ENCODE measurements at regions of chr5 and their contacts with region 1.

Region 1: GRCh38 chr5:77775790-77776553 is at the start of gene TBCA:
- DNase-seq: peak; percentile 96
- ATAC-seq: peak; percentile 89
- H3K4me3 Mint-ChIP-seq: peak within 1 kb of the TSS; percentile 95
- H3K27ac Mint-ChIP-seq: peak within 1 kb of the TSS; percentile 93
- H3K4me1 Mint-ChIP-seq: peaks cover 44% of the 10 kb centered on the region
- H3K27me3 Mint-ChIP-seq: no peaks in the 10 kb centered on the region
- CTCF ChIP-seq: no peak
- total RNA-seq, gene TBCA: 113 and 128 TPM in 2 replicates

Region 2: DNA sequence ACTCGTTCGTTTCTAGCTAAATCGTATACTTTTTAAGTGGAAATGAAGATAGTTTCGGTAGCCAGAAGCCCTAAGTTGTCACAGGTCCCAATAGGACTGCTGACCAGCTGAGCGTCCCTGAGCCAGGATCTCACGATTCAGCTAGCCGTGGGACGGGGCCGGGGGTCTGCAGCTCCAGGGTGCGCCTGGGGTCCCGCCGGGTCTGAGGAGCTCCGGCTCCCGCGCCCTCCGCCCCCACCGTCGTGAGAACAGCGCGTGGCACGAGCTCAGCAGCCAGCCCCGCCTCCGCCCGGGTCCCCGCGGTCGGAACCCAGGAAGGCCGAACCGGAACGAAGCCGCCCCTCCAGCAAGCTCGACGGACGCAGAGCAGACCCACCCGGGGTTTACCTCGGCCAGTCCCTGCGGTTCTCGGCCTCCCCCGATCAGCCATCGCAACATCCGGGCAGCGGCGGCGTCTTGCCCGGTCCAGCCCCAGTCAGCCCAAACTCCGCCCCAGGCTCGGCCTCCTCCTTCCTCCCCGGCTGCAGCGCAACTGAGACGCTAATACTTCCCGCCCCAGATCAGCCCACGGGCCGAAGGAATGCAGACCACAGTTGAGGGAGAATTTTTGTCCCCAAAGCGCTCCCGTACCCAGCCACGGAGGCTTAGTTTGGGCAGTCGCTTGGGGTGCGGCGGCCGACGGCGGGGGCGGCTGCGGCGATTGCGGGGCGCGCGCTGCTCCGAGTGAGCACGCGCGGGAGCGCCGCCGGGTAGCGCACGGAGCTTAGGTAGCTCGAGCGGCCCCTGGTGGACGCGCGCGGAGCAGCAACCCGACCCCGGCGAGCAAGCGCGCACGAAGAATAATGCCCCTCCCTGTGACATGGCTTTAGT is 284.0 kb before region 1 on chr5 and contains the start of gene WDR41:
- CTCF ChIA-PET with region 1: no interaction called
- POLR2A ChIA-PET with region 1: no interaction called
- intact Hi-C with region 1: loop called (anchors 1 kb)
- DNase-seq: peak; percentile 87
- ATAC-seq: peak; percentile 82
- H3K4me3 Mint-ChIP-seq: peak within 1 kb of the TSS; percentile 91
- H3K27ac Mint-ChIP-seq: peak within 1 kb of the TSS; percentile 93
- H3K4me1 Mint-ChIP-seq: peaks cover 22% of the 10 kb centered on the region
- H3K27me3 Mint-ChIP-seq: peaks cover 7% of the 10 kb centered on the region
- CTCF ChIP-seq: no peak
- total RNA-seq, gene WDR41: 29.2 and 33.0 TPM in 2 replicates

Region 3: GRCh38 chr5:77844623-77845323 is 68.8 kb after region 1 on chr5:
- CTCF ChIA-PET with region 1: no interaction called
- POLR2A ChIA-PET with region 1: no interaction called
- intact Hi-C with region 1: loop called (anchors 2 kb)
- DNase-seq: no peak
- ATAC-seq: peak; percentile 45
- H3K4me3 Mint-ChIP-seq: peak overlapping the region; percentile 83
- H3K27ac Mint-ChIP-seq: no peak overlapping the region
- H3K4me1 Mint-ChIP-seq: peaks cover 10% of the 10 kb centered on the region
- H3K27me3 Mint-ChIP-seq: peaks cover 25% of the 10 kb centered on the region
- CTCF ChIP-seq: no peak

Region 4: GRCh38 chr5:77972469-77973252 is 196.7 kb after region 1 on chr5:
- CTCF ChIA-PET with region 1: no interaction called
- POLR2A ChIA-PET with region 1: no interaction called
- intact Hi-C with region 1: loop called (anchors 1 kb)
- DNase-seq: peak; percentile 41
- ATAC-seq: peak; percentile 71
- H3K4me3 Mint-ChIP-seq: peak overlapping the region; percentile 69
- H3K27ac Mint-ChIP-seq: no peak overlapping the region
- H3K4me1 Mint-ChIP-seq: peaks cover 17% of the 10 kb centered on the region
- H3K27me3 Mint-ChIP-seq: peaks cover 46% of the 10 kb centered on the region
- CTCF ChIP-seq: no peak

Region 5: DNA sequence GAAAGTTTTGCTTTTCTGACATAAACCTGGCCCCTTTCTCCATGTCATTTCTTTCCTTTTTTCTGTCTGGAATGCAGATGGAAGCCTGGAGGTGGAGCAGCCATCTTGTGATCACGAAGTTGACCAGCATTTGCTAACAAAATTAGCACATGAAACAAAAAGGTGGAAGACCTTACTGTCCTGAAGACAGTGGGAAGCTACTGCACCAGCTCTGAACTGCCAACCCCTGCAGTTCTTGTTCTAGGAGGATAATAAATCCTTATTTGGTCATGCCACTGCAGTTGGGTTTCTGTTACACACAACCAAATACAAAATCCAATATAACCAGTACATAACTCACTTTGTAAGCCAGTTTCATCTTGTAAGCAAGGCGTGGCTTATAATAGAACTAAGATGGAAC is 249.6 kb after region 1 on chr5:
- CTCF ChIA-PET with region 1: no interaction called
- POLR2A ChIA-PET with region 1: no interaction called
- intact Hi-C with region 1: no loop called
- DNase-seq: no peak
- ATAC-seq: no peak
- H3K4me3 Mint-ChIP-seq: no peak overlapping the region
- H3K27ac Mint-ChIP-seq: no peak overlapping the region
- H3K4me1 Mint-ChIP-seq: no peaks in the 10 kb centered on the region
- H3K27me3 Mint-ChIP-seq: no peaks in the 10 kb centered on the region
- CTCF ChIP-seq: no peak

Region 6: GRCh38 chr5:78221964-78222451 is 446.0 kb after region 1 on chr5:
- CTCF ChIA-PET with region 1: no interaction called
- POLR2A ChIA-PET with region 1: no interaction called
- intact Hi-C with region 1: loop called (anchors 1 kb)
- DNase-seq: peak; percentile 47
- ATAC-seq: peak; percentile 100
- H3K4me3 Mint-ChIP-seq: peak overlapping the region; percentile 1
- H3K27ac Mint-ChIP-seq: peak overlapping the region; percentile 54
- H3K4me1 Mint-ChIP-seq: peaks cover 18% of the 10 kb centered on the region
- H3K27me3 Mint-ChIP-seq: no peaks in the 10 kb centered on the region
- CTCF ChIP-seq: no peak

Region 7: DNA sequence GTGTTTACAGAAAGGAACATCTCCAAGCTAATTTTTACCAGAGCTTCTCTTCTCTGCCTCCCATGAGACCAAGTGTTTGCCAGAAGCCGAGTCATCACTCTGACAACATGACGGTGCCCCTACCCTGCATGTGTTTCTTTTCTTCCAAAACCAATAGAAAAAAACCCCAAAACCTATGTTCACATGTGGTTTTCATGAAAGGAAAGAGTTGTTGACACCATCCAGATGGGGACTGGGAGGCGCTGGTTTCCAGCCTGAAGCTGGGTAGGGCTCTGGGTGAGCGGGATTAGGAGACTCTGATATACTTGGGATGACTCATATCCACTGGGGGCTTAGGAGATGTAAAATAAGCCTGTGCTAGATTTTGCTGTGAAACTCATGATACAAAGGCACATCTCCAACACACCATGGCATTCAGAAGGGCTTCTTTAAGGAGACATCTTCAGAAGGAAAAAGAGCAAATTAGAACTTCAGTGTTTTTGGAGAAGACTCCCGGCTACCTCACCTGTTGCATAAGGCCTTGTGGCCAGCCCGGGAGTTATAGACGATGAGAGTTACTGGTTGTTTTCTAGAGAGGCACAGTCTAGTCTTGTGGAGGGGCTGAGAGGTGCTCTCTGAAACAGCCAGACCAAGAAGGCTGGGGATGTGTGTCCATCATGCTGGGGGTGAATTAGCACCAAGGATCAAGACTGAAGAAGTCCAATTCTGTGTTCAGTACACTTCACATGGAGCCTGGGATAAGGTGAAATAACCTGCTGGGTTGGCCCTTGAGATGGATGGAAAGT is 981.5 kb after region 1 on chr5:
- CTCF ChIA-PET with region 1: no interaction called
- POLR2A ChIA-PET with region 1: no interaction called
- intact Hi-C with region 1: loop called (anchors 5 kb)
- DNase-seq: no peak
- ATAC-seq: peak; percentile 38
- H3K4me3 Mint-ChIP-seq: peak overlapping the region; percentile 64
- H3K27ac Mint-ChIP-seq: peak overlapping the region; percentile 95
- H3K4me1 Mint-ChIP-seq: peaks cover 78% of the 10 kb centered on the region
- H3K27me3 Mint-ChIP-seq: no peaks in the 10 kb centered on the region
- CTCF ChIP-seq: no peak